Activated B cell treated with CpG ODN at 0.5 μM for 24 hours (primary cell): ENCODE measurements at regions of chr6 and their contacts with region 1.

Region 1: GRCh38 chr6:73739096-73739495 is 43.1 kb downstream of the CD109 start:
- DNase-seq: no peak
- ATAC-seq: peak; percentile 71
- H3K4me3 Mint-ChIP-seq: no peak overlapping the region
- H3K27ac Mint-ChIP-seq: no peak overlapping the region
- H3K4me1 Mint-ChIP-seq: no peaks in the 10 kb centered on the region
- H3K27me3 Mint-ChIP-seq: peaks cover 3% of the 10 kb centered on the region
- CTCF ChIP-seq: no peak

Region 2: DNA sequence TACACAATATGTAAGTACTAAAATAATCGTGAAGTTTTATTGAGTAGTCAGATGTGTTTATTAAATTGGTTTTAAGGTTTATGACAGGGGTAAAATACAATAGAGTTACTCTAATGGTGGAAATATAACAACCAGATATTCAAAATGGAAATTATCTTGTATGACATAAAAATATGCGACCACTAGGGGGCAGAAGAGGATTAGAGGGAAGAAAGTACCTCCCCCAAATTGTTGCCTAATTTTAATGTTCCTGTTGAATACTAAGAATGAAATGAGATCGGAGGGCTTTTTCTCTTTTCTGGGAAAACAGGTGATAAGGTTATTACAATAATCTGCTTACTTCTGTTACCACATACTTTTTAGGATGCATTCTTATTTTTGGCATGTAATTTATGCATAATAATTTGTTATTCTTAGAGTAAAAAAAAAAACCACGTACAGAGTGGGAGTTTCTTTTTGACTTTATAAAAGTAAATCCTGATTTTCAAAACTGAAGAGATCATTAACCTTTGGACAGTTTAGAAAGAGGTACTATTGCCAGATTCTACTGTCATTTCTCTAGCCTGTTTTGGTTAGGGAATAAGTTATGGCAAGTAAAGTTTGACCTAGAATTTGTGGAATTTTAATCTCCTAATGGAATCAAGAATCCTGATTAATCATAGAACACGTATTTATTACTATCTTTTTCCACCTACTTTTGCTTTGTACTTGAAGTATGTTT is 116.1 kb after region 1 on chr6:
- CTCF ChIA-PET with region 1: interaction called, 3 read pairs
- POLR2A ChIA-PET with region 1: no interaction called
- intact Hi-C with region 1: loop called (anchors 1 kb)
- DNase-seq: no peak
- ATAC-seq: no peak
- H3K4me3 Mint-ChIP-seq: no peak overlapping the region
- H3K27ac Mint-ChIP-seq: no peak overlapping the region
- H3K4me1 Mint-ChIP-seq: no peaks in the 10 kb centered on the region
- H3K27me3 Mint-ChIP-seq: no peaks in the 10 kb centered on the region
- CTCF ChIP-seq: peak; percentile 28

Region 3: GRCh38 chr6:74091136-74091793 is 352.2 kb after region 1 on chr6:
- CTCF ChIA-PET with region 1: no interaction called
- POLR2A ChIA-PET with region 1: no interaction called
- intact Hi-C with region 1: loop called (anchors 2 kb)
- DNase-seq: no peak
- ATAC-seq: no peak
- H3K4me3 Mint-ChIP-seq: no peak overlapping the region
- H3K27ac Mint-ChIP-seq: no peak overlapping the region
- H3K4me1 Mint-ChIP-seq: no peaks in the 10 kb centered on the region
- H3K27me3 Mint-ChIP-seq: no peaks in the 10 kb centered on the region
- CTCF ChIP-seq: no peak

Region 4: GRCh38 chr6:74574794-74575193 is 835.7 kb after region 1 on chr6:
- CTCF ChIA-PET with region 1: interaction called, 7 read pairs
- POLR2A ChIA-PET with region 1: no interaction called
- intact Hi-C with region 1: loop called (anchors 1 kb)
- DNase-seq: no peak
- ATAC-seq: no peak
- H3K4me3 Mint-ChIP-seq: no peak overlapping the region
- H3K27ac Mint-ChIP-seq: no peak overlapping the region
- H3K4me1 Mint-ChIP-seq: no peaks in the 10 kb centered on the region
- H3K27me3 Mint-ChIP-seq: no peaks in the 10 kb centered on the region
- CTCF ChIP-seq: no peak